HCT116 (cell line): ENCODE measurements at regions of chr3 and their contacts with region 1.

Region 1: DNA sequence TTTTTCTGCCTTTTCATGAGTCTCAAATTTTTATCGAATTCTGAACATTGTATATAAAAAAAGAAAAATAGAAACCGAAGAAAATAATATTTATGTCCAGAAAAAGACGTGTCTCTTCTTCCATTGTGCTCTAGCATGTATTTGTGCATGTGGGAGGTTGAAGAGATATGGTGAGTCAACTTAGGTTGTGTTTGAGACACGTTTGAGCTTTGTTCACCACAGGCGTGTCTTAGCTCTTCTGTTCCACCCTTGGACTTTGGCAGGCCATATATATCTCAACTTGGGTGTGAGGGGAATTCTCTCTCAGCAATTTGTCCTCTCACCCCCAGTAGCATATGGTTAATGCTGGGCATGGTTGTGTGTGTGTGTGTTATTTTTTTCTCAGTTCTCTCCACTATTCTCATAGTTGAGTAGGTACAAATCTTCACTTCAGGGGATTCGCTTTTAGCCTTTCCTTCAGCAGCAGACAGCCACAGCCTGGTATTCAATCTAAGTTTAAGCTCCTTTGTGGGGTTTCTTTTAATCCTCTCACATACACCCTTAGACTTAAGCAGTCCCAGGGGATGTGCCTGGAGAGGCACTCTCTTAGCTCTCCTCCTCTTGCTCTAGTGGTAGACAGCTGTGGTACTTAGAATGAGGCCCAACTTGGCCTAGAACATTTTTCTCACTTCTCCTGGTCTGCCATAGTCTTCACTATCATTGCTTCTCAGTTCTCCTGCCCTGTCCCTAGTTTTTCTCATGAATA is 286.5 kb upstream of the RBMS3 start:
- DNase-seq: no peak
- ATAC-seq: no peak
- H3K4me3 ChIP-seq: no peak overlapping the region
- H3K27ac ChIP-seq: no peak overlapping the region
- H3K4me1 ChIP-seq: no peaks in the 10 kb centered on the region
- H3K27me3 ChIP-seq: no peaks in the 10 kb centered on the region
- CTCF ChIP-seq: no peak
- POLR2A ChIP-seq: no peak
- RAD21 ChIP-seq: no peak

Region 2: GRCh38 chr3:28978092-28978491 is 16.2 kb before region 1 on chr3:
- CTCF ChIA-PET with region 1: no interaction called
- POLR2A ChIA-PET with region 1: no interaction called
- RAD21 ChIA-PET with region 1: no interaction called
- intact Hi-C with region 1: loop called (anchors 2 kb)
- DNase-seq: no peak
- ATAC-seq: no peak
- H3K4me3 ChIP-seq: no peak overlapping the region
- H3K27ac ChIP-seq: no peak overlapping the region
- H3K4me1 ChIP-seq: no peaks in the 10 kb centered on the region
- H3K27me3 ChIP-seq: no peaks in the 10 kb centered on the region
- CTCF ChIP-seq: no peak
- POLR2A ChIP-seq: no peak
- RAD21 ChIP-seq: no peak